BJ (cell line): ENCODE measurements at regions of chr6 and their contacts with region 1.

Region 1: GRCh38 chr6:44338228-44339122 is 4.0 kb upstream of the SPATS1 start:
- DNase-seq: no peak
- H3K4me3 ChIP-seq: no peak overlapping the region
- H3K27me3 ChIP-seq: peaks cover 16% of the 10 kb centered on the region
- CTCF ChIP-seq: peak; percentile 71

Region 2: GRCh38 chr6:44304282-44305199 is 33.9 kb before region 1 on chr6:
- CTCF ChIA-PET with region 1: interaction called, 15 read pairs
- POLR2A ChIA-PET with region 1: no interaction called
- DNase-seq: no peak
- H3K4me3 ChIP-seq: no peak overlapping the region
- H3K27me3 ChIP-seq: no peaks in the 10 kb centered on the region
- CTCF ChIP-seq: peak; percentile 78

Region 3: GRCh38 chr6:44321210-44321609 is 17.3 kb before region 1 on chr6:
- CTCF ChIA-PET with region 1: interaction called, 30 read pairs
- POLR2A ChIA-PET with region 1: no interaction called
- DNase-seq: no peak
- H3K4me3 ChIP-seq: no peak overlapping the region
- H3K27me3 ChIP-seq: peaks cover 15% of the 10 kb centered on the region
- CTCF ChIP-seq: no peak

Region 4: GRCh38 chr6:44327096-44327495 is 11.4 kb before region 1 on chr6:
- CTCF ChIA-PET with region 1: interaction called, 30 read pairs
- POLR2A ChIA-PET with region 1: no interaction called
- DNase-seq: no peak
- H3K4me3 ChIP-seq: no peak overlapping the region
- H3K27me3 ChIP-seq: peaks cover 11% of the 10 kb centered on the region
- CTCF ChIP-seq: no peak